ENCODE measurements at regions of chr5 and their contacts with region 1.

Region 1: DNA sequence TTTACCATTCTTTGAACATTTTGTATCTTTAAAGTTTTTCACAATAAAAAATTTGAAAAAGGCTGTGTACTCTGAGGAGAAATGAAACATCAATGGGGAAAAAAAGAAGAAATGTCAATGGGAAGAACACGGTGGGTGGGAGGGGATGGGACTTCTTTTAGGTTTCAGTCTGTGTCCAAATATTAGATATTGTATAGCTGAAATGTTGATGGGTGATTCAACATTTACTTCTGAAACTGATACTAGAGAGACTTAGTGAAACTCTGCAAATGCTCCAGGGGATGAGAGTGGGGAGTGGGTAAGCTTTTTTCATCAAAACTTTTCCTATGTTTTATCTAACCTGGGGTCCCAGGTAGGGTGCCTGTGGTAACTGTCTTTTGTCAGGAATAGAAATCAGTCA is 311.9 kb downstream of the MAN2A1 start:
- DNase-seq: no peak
- ATAC-seq: no peak

Region 2: GRCh38 chr5:109921735-109922380 is 79.8 kb before region 1 on chr5:
- intact Hi-C with region 1: loop called (anchors 5 kb)
- DNase-seq: peak; percentile 65
- ATAC-seq: peak; percentile 93

Measured in Right ventricle myocardium inferior (tissue), 1 donor.